ENCODE measurements at regions of chr3 and their contacts with region 1.

Region 1: DNA sequence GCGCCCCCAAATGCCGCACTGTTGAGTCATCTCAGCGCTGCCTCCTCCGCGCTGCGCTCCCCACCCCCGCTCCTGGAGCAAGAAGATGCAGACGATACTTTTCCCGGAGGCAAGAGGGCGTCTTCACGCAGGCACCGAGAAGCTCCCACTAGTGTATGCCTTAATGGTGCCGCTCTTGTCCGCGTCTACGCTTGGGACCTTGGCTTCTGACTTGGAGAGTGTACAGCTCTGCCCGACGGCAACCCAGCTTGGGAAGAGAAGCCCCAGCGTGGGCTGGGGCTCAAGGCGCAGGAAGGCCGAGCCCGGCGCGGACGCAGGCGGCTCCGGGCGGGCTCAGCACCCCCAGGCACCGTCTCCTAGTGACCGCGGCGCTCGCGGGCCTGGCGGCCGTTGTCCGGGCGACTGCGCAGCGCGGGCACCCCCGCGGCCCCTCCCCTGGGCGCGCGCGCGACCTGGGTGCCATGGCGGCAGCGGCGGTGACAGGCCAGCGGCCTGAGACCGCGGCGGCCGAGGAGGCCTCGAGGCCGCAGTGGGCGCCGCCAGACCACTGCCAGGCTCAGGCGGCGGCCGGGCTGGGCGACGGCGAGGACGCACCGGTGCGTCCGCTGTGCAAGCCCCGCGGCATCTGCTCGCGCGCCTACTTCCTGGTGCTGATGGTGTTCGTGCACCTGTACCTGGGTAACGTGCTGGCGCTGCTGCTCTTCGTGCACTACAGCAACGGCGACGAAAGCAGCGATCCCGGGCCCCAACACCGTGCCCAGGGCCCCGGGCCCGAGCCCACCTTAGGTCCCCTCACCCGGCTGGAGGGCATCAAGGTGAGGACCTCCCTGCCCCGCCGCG is at the start of gene P4HTM:
- DNase-seq: peak; percentile 75
- H3K4me3 ChIP-seq: peak within 1 kb of the TSS; percentile 88
- H3K27me3 ChIP-seq: no peaks in the 10 kb centered on the region
- CTCF ChIP-seq: peak; percentile 62
- polyA plus RNA-seq, gene P4HTM: 25.8 and 38.4 TPM in 2 replicates

Region 2: GRCh38 chr3:48885753-48886152 is 104.3 kb before region 1 on chr3:
- CTCF ChIA-PET with region 1: no interaction called
- POLR2A ChIA-PET with region 1: no interaction called
- DNase-seq: no peak
- H3K4me3 ChIP-seq: no peak overlapping the region
- H3K27me3 ChIP-seq: no peaks in the 10 kb centered on the region
- CTCF ChIP-seq: no peak

Region 3: GRCh38 chr3:48974076-48974864 is 15.7 kb before region 1 on chr3:
- CTCF ChIA-PET with region 1: interaction called, 29 read pairs
- POLR2A ChIA-PET with region 1: no interaction called
- DNase-seq: no peak
- H3K4me3 ChIP-seq: no peak overlapping the region
- H3K27me3 ChIP-seq: no peaks in the 10 kb centered on the region
- CTCF ChIP-seq: no peak

Region 4: GRCh38 chr3:49007068-49007770 is 17.2 kb after region 1 on chr3 and contains the start of gene WDR6:
- CTCF ChIA-PET with region 1: interaction called, 46 read pairs
- POLR2A ChIA-PET with region 1: interaction called, 9 read pairs
- DNase-seq: peak; percentile 84
- H3K4me3 ChIP-seq: peak within 1 kb of the TSS; percentile 96
- H3K27me3 ChIP-seq: no peaks in the 10 kb centered on the region
- CTCF ChIP-seq: peak; percentile 50
- polyA plus RNA-seq, gene WDR6: 100 and 164 TPM in 2 replicates

Region 5: DNA sequence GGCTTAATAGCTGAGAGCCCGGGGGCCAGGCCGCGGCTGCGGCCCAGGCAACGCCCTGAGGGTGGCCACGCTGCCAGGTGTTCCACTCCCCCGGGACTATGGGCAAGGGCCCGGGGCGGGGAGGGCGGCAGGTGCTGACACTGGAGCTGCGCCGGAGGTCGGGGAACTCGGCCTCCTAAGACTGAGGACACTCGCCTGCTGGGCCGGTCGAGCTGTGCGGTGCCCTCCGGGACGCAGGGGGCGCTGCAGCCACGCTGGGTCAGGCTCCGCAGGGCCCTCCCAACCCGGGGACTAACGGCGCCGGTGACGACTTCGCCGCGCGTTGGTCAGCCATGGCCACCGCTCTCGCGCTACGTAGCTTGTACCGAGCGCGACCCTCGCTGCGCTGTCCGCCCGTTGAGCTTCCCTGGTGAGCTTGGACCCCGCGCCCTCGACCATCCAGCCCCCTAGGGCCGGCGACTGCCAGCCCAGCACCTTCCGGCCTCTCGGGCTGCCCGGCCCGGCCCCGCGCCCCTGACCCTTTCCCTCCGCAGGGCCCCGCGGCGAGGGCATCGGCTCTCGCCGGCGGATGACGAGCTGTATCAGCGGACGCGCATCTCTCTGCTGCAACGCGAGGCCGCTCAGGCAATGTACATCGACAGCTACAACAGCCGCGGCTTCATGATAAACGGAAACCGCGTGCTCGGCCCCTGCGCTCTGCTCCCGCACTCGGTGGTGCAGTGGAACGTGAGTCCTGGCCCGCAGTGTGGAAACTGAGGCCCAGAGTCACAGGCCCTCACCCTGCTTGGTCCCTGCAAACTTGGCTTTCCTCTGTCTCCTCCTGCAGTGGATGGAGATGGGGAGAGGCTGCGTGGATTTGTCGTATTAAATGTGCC is 32.0 kb after region 1 on chr3 and contains the start of gene NDUFAF3:
- CTCF ChIA-PET with region 1: interaction called, 60 read pairs
- POLR2A ChIA-PET with region 1: interaction called, 3 read pairs
- DNase-seq: peak; percentile 51
- H3K4me3 ChIP-seq: peak within 1 kb of the TSS; percentile 88
- H3K27me3 ChIP-seq: no peaks in the 10 kb centered on the region
- CTCF ChIP-seq: peak; percentile 97
- polyA plus RNA-seq, gene NDUFAF3: 65.1 and 89.5 TPM in 2 replicates

Region 6: DNA sequence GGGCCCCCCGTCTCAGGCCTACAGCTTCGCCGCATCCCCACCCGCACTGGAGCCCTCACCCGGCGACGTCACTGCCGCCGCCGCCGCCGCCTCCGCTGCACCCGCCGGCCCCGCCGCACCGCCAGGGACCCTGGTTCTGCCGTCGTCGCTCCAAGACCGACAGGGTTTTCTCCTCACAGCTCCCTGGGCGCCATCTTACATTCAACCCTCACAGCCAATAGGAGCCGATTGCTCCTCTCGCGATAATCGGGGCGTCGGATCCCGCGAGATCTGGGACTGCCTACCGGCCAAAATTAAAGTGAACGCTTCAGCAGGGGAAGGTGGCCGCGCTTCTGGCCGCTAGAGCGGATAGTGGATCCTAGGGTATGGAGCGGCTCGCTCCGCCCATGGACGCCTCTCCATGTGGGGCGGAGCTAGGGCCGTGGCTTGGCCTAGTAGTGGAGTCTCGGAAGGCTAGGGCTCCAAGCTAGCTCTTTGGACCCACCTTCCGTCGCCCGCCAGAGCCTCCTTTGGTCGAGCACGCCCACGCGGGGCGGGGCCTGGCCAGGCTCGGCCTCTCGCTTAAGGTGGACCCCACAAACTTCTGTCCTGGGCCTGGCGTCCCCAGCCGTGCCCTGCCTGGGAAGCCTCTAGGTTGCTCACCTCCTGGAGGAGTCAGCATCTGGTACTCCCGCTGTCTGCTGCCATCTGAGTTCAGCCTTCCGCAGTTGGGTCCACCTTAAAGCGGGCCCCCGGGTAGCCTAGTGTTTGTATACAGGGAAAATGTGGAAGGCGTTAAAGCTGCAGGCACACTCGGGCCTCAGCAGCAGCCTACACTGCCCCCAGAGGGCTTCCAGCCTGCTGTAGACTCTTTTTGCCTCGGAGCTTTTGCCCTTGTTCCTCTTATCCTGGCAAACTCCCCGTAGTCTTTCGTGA is 104.1 kb after region 1 on chr3 and contains the start of gene QRICH1:
- CTCF ChIA-PET with region 1: interaction called, 10 read pairs
- POLR2A ChIA-PET with region 1: no interaction called
- DNase-seq: peak; percentile 93
- H3K4me3 ChIP-seq: peak within 1 kb of the TSS; percentile 79
- H3K27me3 ChIP-seq: no peaks in the 10 kb centered on the region
- CTCF ChIP-seq: peak; percentile 74
- polyA plus RNA-seq, gene QRICH1: 51.8 and 77.3 TPM in 2 replicates